GM12878 (cell line): ENCODE measurements at regions of chr15 and their contacts with region 1.

Region 1: DNA sequence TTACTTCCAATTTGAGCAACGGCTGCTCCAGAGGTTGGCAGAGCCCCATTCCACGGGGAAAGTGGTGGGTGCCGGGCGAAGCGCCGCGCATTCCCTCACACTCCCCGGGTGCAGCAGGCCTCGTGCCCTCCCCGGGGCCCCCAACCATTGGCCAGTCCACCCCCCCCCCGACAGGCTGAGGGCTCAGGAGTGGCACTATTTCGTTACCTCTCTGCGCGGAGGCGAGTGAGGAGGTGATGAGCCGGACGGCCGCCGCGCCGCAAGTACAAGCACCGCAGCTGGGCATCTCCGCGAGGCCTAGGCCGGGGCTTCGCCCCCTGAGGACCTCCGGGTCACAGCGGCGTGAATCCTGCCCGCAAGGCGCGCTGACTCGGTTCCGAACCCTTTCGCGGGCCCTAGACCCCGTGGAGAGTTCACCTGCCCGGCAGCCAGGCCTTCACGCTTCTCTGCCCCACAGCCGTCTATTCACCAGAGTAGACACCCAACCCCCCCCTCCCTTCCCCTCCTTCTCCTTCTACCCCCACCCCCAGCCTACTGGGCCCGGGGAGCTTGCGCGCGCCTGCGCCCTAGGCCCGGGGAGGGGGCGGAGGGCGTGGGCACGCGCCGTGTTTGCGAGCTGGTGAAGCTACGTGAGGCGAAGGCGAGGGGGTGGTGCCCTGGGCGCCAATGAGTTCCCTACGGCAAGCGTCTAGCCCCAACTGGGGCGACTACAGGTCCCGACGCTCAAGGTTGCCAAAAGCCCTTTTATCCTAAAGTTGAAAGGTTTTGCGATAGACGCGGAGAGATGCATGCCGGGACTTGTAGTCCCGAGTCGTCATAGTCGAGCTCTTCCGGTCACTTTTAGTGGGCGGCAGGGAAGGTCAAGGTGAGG is at the start of gene CLPX:
- DNase-seq: peak; percentile 90
- ATAC-seq: peak; percentile 88
- H3K4me3 ChIP-seq: peak within 1 kb of the TSS; percentile 94
- H3K27ac ChIP-seq: peak within 1 kb of the TSS; percentile 89
- H3K4me1 ChIP-seq: peaks cover 3% of the 10 kb centered on the region; the same call in 1 of the 2 replicates
- H3K27me3 ChIP-seq: no peaks in the 10 kb centered on the region
- CTCF ChIP-seq: no peak
- EP300 ChIP-seq: no peak
- POLR2A ChIP-seq: peak; percentile 92
- RAD21 ChIP-seq: no peak
- polyA plus RNA-seq, gene CLPX: 10.1 to 12.5 TPM

Region 2: GRCh38 chr15:65054333-65055200 is 130.5 kb before region 1 on chr15:
- CTCF ChIA-PET with region 1: no interaction called
- POLR2A ChIA-PET with region 1: no interaction called
- RAD21 ChIA-PET with region 1: no interaction called
- SMC1A ChIA-PET with region 1: no interaction called
- in situ Hi-C with region 1: no loop called
- intact Hi-C with region 1: loop called (anchors 5 kb)
- DNase-seq: no peak
- ATAC-seq: peak; percentile 82
- H3K4me3 ChIP-seq: no peak overlapping the region
- H3K27ac ChIP-seq: no peak overlapping the region
- H3K4me1 ChIP-seq: peaks cover 6% of the 10 kb centered on the region
- H3K27me3 ChIP-seq: no peaks in the 10 kb centered on the region
- CTCF ChIP-seq: peak; percentile 89 to 93 (median 89)
- EP300 ChIP-seq: no peak
- POLR2A ChIP-seq: no peak
- RAD21 ChIP-seq: peak; percentile 84

Region 3: DNA sequence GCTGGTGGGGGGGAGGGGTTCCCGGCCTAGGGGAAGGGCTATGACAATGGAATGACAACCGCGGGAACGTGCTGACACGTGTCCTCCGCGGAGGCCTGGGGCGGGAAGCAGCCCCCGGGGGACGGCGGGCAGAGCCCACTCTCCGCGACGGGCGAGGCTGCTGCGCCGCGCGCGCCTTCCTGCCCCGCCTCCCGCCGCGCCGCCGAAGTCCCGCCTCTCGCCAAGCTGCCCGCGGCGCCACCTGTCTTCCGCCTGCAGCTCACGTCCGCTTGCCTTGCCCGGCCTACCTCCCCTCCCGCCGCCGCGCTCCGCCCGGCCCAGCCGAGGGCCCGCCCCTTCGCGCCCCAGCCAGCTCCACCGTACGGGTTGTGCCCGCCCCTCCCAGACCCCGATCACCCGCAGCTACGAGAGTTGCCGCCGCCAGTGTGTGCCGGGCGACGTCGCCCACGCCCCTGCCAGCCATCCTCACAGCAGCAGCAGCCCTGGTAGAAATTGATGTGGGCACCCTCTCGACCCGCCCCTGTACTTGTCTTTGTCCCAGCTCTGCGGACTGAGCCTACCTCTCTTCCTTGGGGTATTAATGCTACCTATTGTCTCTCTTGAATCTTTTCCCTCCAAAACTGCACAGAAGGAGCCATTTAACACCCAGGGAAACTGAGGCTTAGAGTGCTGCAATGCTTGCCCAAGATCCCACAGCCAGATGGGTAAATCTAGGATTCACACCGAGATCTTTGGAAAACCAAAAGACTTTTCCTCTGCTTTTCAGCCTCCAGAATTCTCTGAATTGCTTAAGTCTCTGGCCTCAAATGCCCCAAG is 101.8 kb after region 1 on chr15 and contains the start of gene PARP16:
- CTCF ChIA-PET with region 1: interaction called, 11 read pairs
- POLR2A ChIA-PET with region 1: interaction called, 21 read pairs
- RAD21 ChIA-PET with region 1: interaction called, 9 read pairs
- SMC1A ChIA-PET with region 1: interaction called, 12 read pairs
- in situ Hi-C with region 1: no loop called
- intact Hi-C with region 1: loop called (anchors 2 kb)
- DNase-seq: peak; percentile 77
- ATAC-seq: peak; percentile 97
- H3K4me3 ChIP-seq: peak within 1 kb of the TSS; percentile 74
- H3K27ac ChIP-seq: peak within 1 kb of the TSS; percentile 74
- H3K4me1 ChIP-seq: peaks cover 11% of the 10 kb centered on the region
- H3K27me3 ChIP-seq: no peaks in the 10 kb centered on the region
- CTCF ChIP-seq: peak in 1 of 3 experiments; percentile 51; a peak in 2 of 6 replicates
- EP300 ChIP-seq: no peak
- POLR2A ChIP-seq: peak; percentile 87
- RAD21 ChIP-seq: no peak
- polyA plus RNA-seq, gene PARP16: 4.9 to 7.6 TPM

Region 4: GRCh38 chr15:65298731-65299130 is 113.6 kb after region 1 on chr15:
- CTCF ChIA-PET with region 1: interaction called, 26 read pairs
- POLR2A ChIA-PET with region 1: interaction called, 6 read pairs
- RAD21 ChIA-PET with region 1: interaction called, 15 read pairs
- SMC1A ChIA-PET with region 1: interaction called, 17 read pairs
- in situ Hi-C with region 1: loop called (anchors 5 kb)
- intact Hi-C with region 1: loop called (anchors 1 kb)
- DNase-seq: no peak
- ATAC-seq: no peak
- H3K4me3 ChIP-seq: no peak overlapping the region
- H3K27ac ChIP-seq: no peak overlapping the region
- H3K4me1 ChIP-seq: peaks cover 9% of the 10 kb centered on the region
- H3K27me3 ChIP-seq: no peaks in the 10 kb centered on the region
- CTCF ChIP-seq: no peak
- EP300 ChIP-seq: no peak
- POLR2A ChIP-seq: no peak
- RAD21 ChIP-seq: no peak

Region 5: DNA sequence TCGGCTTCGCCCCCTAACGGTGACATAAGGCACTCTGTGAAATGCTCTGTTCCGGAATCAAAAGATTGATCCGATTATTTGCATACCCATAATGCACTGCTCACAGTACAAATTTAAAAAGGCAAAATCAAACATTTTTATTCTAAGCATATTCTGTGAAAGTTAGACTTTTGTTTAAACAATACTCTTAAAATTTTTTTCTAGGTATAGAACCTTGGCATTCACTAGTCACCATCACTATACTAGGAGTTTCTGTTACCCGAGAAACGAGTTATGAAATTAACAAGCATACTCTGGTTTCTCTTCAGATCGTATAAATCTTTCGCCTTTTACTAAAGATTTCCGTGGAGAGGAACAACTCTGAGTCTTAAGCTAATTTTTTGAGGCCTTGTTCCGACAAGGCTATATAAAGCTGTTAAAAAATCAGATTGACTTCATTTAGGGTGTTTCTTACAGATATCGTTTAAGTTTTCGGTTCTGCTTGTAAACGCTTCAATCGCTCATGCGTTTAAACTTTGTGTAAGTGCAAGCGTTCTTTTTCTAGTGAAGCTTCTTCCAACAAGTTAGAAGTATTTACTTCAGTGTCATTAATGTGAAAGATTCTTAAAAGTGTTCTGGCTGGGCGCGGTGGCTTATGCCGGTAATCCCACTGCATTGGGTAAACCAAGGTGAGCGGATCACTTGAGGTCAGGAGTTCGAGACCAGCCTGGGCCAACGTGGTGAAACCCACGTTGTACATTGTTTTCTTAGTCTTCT is 119.5 kb after region 1 on chr15 and contains the start of gene RNU5B-1:
- CTCF ChIA-PET with region 1: interaction called, 11 read pairs
- POLR2A ChIA-PET with region 1: interaction called, 6 read pairs
- RAD21 ChIA-PET with region 1: interaction called, 4 read pairs
- SMC1A ChIA-PET with region 1: interaction called, 10 read pairs
- in situ Hi-C with region 1: loop called (anchors 5 kb)
- intact Hi-C with region 1: loop called (anchors 2 kb)
- DNase-seq: peak; percentile 96
- ATAC-seq: peak; percentile 86
- H3K4me3 ChIP-seq: peak within 1 kb of the TSS; percentile 33
- H3K27ac ChIP-seq: peak within 1 kb of the TSS; percentile 97
- H3K4me1 ChIP-seq: peaks cover 10% of the 10 kb centered on the region
- H3K27me3 ChIP-seq: no peaks in the 10 kb centered on the region
- CTCF ChIP-seq: peak; percentile 82 to 91 (median 89)
- EP300 ChIP-seq: no peak
- POLR2A ChIP-seq: peak; percentile 96
- RAD21 ChIP-seq: peak; percentile 34; the same call in 1 of the 2 replicates
- polyA plus RNA-seq, gene RNU5B-1: not detected